Natural killer cell (primary cell): ENCODE measurements at regions of chr19 and their contacts with region 1.

Region 1: DNA sequence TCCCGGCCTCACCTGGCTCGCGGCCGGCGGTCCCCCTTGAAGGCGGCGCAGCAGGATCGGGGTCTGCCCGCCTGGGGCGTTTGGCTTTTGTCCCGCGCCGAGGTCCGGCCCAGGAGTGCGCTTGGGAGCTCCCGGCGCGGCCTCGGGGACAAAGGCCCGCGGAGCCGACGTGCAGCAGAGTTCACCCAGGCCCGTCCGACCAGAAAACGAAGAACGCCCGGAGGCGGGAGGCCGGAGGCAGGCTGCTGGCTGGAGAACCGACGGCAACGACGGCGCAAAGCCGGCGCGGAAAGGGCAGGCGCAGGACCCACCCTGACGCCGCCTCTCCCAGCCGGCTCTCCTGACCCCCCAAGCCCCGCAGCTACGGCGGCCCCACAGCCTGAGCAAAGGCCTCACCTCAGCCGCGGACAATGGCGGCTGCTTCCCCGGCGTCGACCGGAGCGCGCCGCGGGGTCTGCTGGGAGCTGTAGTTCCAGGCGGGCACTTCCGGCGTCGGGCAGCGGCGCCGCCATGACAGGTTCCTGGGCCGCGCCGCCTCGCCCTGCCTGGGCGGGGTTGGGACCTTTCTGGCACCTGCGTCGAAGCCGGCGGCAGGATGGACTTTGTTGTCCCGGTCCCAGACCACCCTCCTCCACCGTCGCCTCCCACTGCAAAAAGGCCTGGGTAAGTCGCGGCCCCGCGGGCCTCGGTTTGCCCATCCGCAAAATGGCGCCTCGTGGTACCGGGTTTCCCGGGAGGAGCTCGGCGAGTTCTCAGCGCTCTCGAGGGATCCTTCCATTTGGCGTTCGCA is at the start of gene ZNF606:
- DNase-seq: peak; percentile 87 to 92
- ATAC-seq: peak; percentile 95 to 98 (median 98)
- H3K4me3 ChIP-seq: peak within 1 kb of the TSS; percentile 80
- H3K4me3 Mint-ChIP-seq: peak within 1 kb of the TSS; percentile 92
- H3K27ac ChIP-seq: peak within 1 kb of the TSS; percentile 97
- H3K27ac Mint-ChIP-seq: peak within 1 kb of the TSS; percentile 91 to 93
- H3K4me1 ChIP-seq: peaks cover 21% of the 10 kb centered on the region
- H3K4me1 Mint-ChIP-seq: peaks cover 26 to 39% of the 10 kb centered on the region in 2 donors
- H3K27me3 ChIP-seq: no peaks in the 10 kb centered on the region
- H3K27me3 Mint-ChIP-seq: no peaks in the 10 kb centered on the region
- CTCF ChIP-seq: no peak
- total RNA-seq, gene ZNF606: 8.9 to 13.5 (median 12.5) TPM

Region 2: GRCh38 chr19:57389730-57390598 is 612.6 kb before region 1 on chr19 and contains the start of gene ZNF548:
- intact Hi-C with region 1: loop called (anchors 10 kb)
- DNase-seq: peak; percentile 99
- ATAC-seq: peak; percentile 90 to 98 (median 92)
- H3K4me3 ChIP-seq: peak within 1 kb of the TSS; percentile 81
- H3K4me3 Mint-ChIP-seq: peak within 1 kb of the TSS; percentile 94
- H3K27ac ChIP-seq: peak within 1 kb of the TSS; percentile 95
- H3K27ac Mint-ChIP-seq: peak within 1 kb of the TSS; percentile 97 to 98
- H3K4me1 ChIP-seq: peaks cover 23% of the 10 kb centered on the region
- H3K4me1 Mint-ChIP-seq: peaks cover 37 to 48% of the 10 kb centered on the region in 2 donors
- H3K27me3 ChIP-seq: no peaks in the 10 kb centered on the region
- H3K27me3 Mint-ChIP-seq: peaks cover 0 to 4% of the 10 kb centered on the region in 2 donors
- CTCF ChIP-seq: no peak
- total RNA-seq, gene ZNF548: 75.5 to 104 (median 96.9) TPM

Region 3: DNA sequence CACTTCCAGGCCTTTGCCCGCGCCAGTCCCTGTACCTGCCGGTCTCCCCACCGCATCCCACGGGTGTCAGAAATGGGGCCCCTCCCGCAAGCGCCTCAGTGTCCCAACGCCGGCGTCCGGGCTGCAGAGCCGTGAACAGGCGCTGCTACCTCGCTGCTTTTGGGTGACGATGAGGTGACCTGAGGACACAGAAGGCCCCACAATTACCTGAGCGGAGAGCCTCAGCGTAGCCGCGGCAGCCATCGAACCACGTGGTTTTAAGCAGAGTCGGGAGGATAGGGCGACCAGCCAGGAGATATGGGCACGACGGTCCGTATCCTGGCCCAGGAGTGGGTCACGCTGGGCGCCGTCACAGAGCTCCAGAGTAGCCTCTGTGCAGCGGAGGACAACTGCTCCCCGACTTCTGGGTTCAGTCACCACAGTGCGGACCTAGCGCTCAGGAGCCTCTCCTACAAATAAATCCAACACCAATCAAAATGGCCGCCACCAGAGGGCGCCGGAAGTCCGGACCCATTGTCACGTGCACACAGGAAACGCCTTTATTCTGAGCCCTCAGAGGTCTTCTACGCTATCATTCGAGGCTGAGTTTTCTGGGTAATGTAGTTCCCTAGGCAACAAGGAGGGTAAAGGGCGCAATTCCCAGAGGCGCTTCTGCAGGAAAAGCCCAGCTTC is 113.9 kb before region 1 on chr19 and contains the start of gene ZNF814:
- intact Hi-C with region 1: loop called (anchors 2 kb)
- DNase-seq: peak; percentile 82 to 84
- ATAC-seq: peak; percentile 93 to 97 (median 94)
- H3K4me3 ChIP-seq: peak within 1 kb of the TSS; percentile 84
- H3K4me3 Mint-ChIP-seq: peak within 1 kb of the TSS; percentile 95
- H3K27ac ChIP-seq: peak within 1 kb of the TSS; percentile 75
- H3K27ac Mint-ChIP-seq: peak within 1 kb of the TSS; percentile 89 to 91
- H3K4me1 ChIP-seq: peaks cover 21% of the 10 kb centered on the region
- H3K4me1 Mint-ChIP-seq: peaks cover 22 to 28% of the 10 kb centered on the region in 2 donors
- H3K27me3 ChIP-seq: no peaks in the 10 kb centered on the region
- H3K27me3 Mint-ChIP-seq: no peaks in the 10 kb centered on the region
- CTCF ChIP-seq: no peak
- total RNA-seq, gene ZNF814: 25.2 to 51.2 (median 38.3) TPM

Region 4: GRCh38 chr19:57914531-57914930 is 88.0 kb before region 1 on chr19:
- intact Hi-C with region 1: loop called (anchors 10 kb)
- DNase-seq: no peak
- ATAC-seq: no peak
- H3K4me3 ChIP-seq: no peak overlapping the region
- H3K4me3 Mint-ChIP-seq: peak overlapping the region; percentile 97
- H3K27ac ChIP-seq: no peak overlapping the region
- H3K27ac Mint-ChIP-seq: peak overlapping the region; percentile 99
- H3K4me1 ChIP-seq: peaks cover 16% of the 10 kb centered on the region
- H3K4me1 Mint-ChIP-seq: peaks cover 41 to 47% of the 10 kb centered on the region in 2 donors
- H3K27me3 ChIP-seq: no peaks in the 10 kb centered on the region
- H3K27me3 Mint-ChIP-seq: no peaks in the 10 kb centered on the region
- CTCF ChIP-seq: no peak

Region 5: DNA sequence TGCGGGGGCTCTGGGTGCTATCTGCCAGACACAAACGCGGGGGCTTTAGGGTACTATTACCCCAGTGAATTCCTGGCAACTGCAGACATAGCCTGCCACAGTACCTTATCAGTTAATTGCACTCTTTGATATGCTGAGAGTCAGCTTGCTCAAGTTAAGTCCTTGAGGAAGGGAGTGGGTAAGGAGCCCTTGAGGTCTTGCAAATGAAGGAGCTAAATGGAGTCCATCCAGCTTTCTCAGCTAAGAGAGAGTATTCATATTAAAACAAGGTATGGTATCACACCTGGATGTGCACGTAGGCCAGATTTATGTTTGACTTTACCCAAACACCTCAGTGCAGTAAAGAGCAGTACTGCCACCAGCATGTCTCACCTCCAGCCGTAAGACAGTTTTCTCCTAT is 11.6 kb after region 1 on chr19:
- intact Hi-C with region 1: no loop called
- DNase-seq: no peak
- ATAC-seq: no peak
- H3K4me3 ChIP-seq: no peak overlapping the region
- H3K4me3 Mint-ChIP-seq: no peak overlapping the region
- H3K27ac ChIP-seq: no peak overlapping the region
- H3K27ac Mint-ChIP-seq: no peak overlapping the region
- H3K4me1 ChIP-seq: peaks cover 12% of the 10 kb centered on the region
- H3K4me1 Mint-ChIP-seq: no peaks in the 10 kb centered on the region
- H3K27me3 ChIP-seq: no peaks in the 10 kb centered on the region
- H3K27me3 Mint-ChIP-seq: no peaks in the 10 kb centered on the region
- CTCF ChIP-seq: no peak

Region 6: GRCh38 chr19:58059003-58059670 is 56.6 kb after region 1 on chr19 and contains the start of gene ZNF135:
- intact Hi-C with region 1: loop called (anchors 2 kb)
- DNase-seq: peak; percentile 69 to 81
- ATAC-seq: peak; percentile 79 to 96 (median 96)
- H3K4me3 ChIP-seq: peak within 1 kb of the TSS; percentile 56
- H3K4me3 Mint-ChIP-seq: peak within 1 kb of the TSS; percentile 92
- H3K27ac ChIP-seq: peak within 1 kb of the TSS; percentile 91
- H3K27ac Mint-ChIP-seq: peak within 1 kb of the TSS; percentile 86 to 88
- H3K4me1 ChIP-seq: peaks cover 19% of the 10 kb centered on the region
- H3K4me1 Mint-ChIP-seq: peaks cover 10 to 12% of the 10 kb centered on the region in 2 donors
- H3K27me3 ChIP-seq: no peaks in the 10 kb centered on the region
- H3K27me3 Mint-ChIP-seq: peaks cover 12 to 19% of the 10 kb centered on the region in 2 donors
- CTCF ChIP-seq: no peak
- total RNA-seq, gene ZNF135: 1.6 to 4.3 (median 4.3) TPM

Region 7: DNA sequence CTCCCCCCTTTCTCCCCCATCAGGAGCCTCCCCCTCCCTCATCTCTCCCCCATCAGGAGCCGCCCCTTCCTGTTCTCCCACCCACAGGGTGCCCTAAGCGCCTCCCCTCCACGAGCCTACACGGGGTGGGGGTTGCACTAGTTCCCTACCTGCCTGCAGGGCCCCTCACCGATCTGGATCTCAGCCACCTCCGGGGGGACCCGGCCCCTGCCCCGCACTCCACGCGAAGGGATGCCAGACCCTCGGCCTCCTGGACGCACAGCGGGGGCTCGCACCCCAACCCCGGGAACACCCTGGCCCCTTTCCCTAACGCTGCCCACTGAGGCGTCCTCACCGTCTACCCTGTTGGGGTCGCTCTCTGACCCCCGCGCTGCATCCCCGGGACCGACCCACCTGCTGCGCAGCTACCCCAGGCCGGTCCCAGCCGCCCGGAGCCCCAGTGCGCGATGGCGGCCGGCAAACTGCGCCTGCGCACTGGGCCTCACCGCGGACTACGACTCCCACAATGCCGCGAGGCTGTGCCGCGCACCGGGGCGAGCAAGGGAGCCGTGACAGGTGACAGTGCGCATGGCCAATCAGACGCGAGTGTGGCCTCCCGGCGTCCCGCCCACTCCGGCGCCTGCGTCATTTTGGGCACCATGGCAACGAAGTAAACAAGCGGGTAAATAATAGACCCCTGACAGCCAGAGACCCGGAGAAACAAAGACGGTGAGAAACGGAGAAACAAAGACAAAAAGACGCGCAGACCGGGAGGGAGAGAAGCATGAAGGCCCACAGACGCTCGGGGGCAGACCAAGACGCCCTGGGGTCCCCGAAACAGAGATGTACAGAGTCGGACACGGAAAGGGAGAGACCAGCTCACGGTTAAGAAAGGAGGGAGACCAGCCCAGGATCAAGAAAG is 95.5 kb after region 1 on chr19 and contains the start of gene ZSCAN18:
- intact Hi-C with region 1: loop called (anchors 1 kb)
- DNase-seq: peak; percentile 97 to 98
- ATAC-seq: peak; percentile 92 to 99 (median 97)
- H3K4me3 ChIP-seq: peak within 1 kb of the TSS; percentile 81
- H3K4me3 Mint-ChIP-seq: peak within 1 kb of the TSS; percentile 88
- H3K27ac ChIP-seq: peak within 1 kb of the TSS; percentile 99
- H3K27ac Mint-ChIP-seq: peak within 1 kb of the TSS; percentile 98 to 99
- H3K4me1 ChIP-seq: peaks cover 15% of the 10 kb centered on the region
- H3K4me1 Mint-ChIP-seq: peaks cover 14 to 34% of the 10 kb centered on the region in 2 donors
- H3K27me3 ChIP-seq: no peaks in the 10 kb centered on the region
- H3K27me3 Mint-ChIP-seq: peaks cover 0 to 3% of the 10 kb centered on the region in 2 donors
- CTCF ChIP-seq: no peak
- total RNA-seq, gene ZSCAN18: 29.9 to 42.7 (median 35.9) TPM